K562 (cell line): ENCODE measurements at regions of chr12 and their contacts with region 1.

Region 1: GRCh38 chr12:131002216-131002631 is 48.5 kb downstream of the ADGRD1 start:
- DNase-seq: no peak
- ATAC-seq: no peak
- H3K4me3 ChIP-seq: no peak overlapping the region
- H3K27ac ChIP-seq: no peak overlapping the region
- H3K4me1 ChIP-seq: peaks cover 11 to 32% of the 10 kb centered on the region in 2 experiments
- H3K27me3 ChIP-seq: 0 out of 5 replicates have a peak, but pooled peaks cover 0 to 5% of the 10 kb centered on the region in 2 experiments
- CTCF ChIP-seq: no peak
- EP300 ChIP-seq: no peak
- POLR2A ChIP-seq: no peak
- RAD21 ChIP-seq: no peak

Region 2: GRCh38 chr12:130588696-130589539 is 413.3 kb before region 1 on chr12:
- CTCF ChIA-PET with region 1: no interaction called
- POLR2A ChIA-PET with region 1: no interaction called
- in situ Hi-C with region 1: no loop called
- intact Hi-C with region 1: no loop called
- DNase-seq: no peak
- ATAC-seq: no peak
- H3K4me3 ChIP-seq: no peak overlapping the region
- H3K27ac ChIP-seq: no peak overlapping the region
- H3K4me1 ChIP-seq: no peaks in the 10 kb centered on the region
- H3K27me3 ChIP-seq: peaks cover 14 to 28% of the 10 kb centered on the region in 2 experiments; a peak in 4 of 5 replicates
- CTCF ChIP-seq: no peak
- EP300 ChIP-seq: no peak
- POLR2A ChIP-seq: no peak
- RAD21 ChIP-seq: no peak

Region 3: DNA sequence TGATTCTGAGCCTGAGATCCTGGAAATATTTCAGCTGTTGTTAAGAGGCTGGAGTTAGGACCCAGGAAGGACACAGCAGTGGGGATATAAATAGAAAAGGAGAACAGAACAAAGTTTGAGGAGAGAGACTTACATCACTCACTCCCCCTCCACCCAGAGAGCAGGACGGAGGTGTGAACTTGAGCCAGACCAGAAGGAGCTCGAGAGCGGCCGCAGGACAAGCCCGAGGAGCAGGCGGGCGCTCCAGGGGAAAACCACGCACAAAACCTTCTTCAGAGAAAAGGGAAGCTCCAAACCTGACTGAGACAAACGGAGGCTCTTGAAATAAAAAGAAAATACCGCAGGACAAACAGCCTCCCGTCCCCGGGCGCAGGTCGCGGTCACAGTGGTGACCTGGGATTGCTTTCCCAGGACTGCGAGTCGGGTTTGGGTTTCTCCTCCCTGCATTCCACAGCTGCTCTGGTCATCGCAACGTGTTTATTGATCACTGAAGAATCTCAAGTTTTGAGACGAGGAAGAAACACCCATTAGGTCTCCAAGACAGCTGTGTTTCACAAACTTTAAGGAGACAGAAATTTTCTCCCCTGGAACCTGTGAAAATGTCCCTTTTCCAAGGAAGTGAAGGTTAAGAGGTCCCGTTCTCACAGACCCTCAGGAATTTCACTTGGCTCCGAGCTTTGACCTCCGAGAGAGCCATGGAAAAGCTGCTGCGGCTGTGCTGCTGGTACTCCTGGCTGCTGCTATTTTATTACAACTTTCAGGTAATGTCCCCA is 48.3 kb before region 1 on chr12 and contains the start of gene ADGRD1:
- CTCF ChIA-PET with region 1: no interaction called
- POLR2A ChIA-PET with region 1: interaction called, 3 read pairs
- in situ Hi-C with region 1: no loop called
- intact Hi-C with region 1: loop called (anchors 5 kb)
- DNase-seq: peak in 3 of 4 experiments; percentile 20 to 58 (median 55)
- ATAC-seq: peak; percentile 61
- H3K4me3 ChIP-seq: no peak within 1 kb of the TSS; the same call in 1 of the 2 replicates
- H3K27ac ChIP-seq: peak within 1 kb of the TSS; percentile 57; the same call in 2 of the 3 replicates
- H3K4me1 ChIP-seq: peaks cover 37 to 41% of the 10 kb centered on the region in 2 experiments
- H3K27me3 ChIP-seq: peaks cover 0 to 5% of the 10 kb centered on the region in 2 experiments; a peak in 2 of 5 replicates
- CTCF ChIP-seq: no peak
- EP300 ChIP-seq: no peak
- POLR2A ChIP-seq: no peak
- RAD21 ChIP-seq: no peak
- polyA plus RNA-seq, gene ADGRD1: 1.7 to 2.0 TPM